Spleen (tissue), 13 donors: ENCODE measurements at regions of chr19 and their contacts with region 1.

Region 1: GRCh38 chr19:49676690-49677231 is 310 bp upstream of the PRMT1 start:
- DNase-seq: peak; percentile 99
- H3K4me3 ChIP-seq: peak overlapping the region; percentile 88 to 100 (median 98)
- H3K27ac ChIP-seq: peak overlapping the region; percentile 89 to 97 (median 94)
- H3K4me1 ChIP-seq: peaks cover 23 to 90% (median 55%) of the 10 kb centered on the region in 6 donors
- H3K27me3 ChIP-seq: no peaks in the 10 kb centered on the region
- CTCF ChIP-seq: peak in 1 of 11 experiments; percentile 30
- POLR2A ChIP-seq: no peak

Region 2: GRCh38 chr19:49570138-49570856 is 106.5 kb before region 1 on chr19:
- intact Hi-C with region 1: loop called (anchors 10 kb)
- DNase-seq: no peak
- H3K4me3 ChIP-seq: no peak overlapping the region
- H3K27ac ChIP-seq: peak overlapping the region in 6 of 8 donors; percentile 23 to 76 (median 72)
- H3K4me1 ChIP-seq: peaks cover 12 to 69% (median 59%) of the 10 kb centered on the region in 6 donors
- H3K27me3 ChIP-seq: no peaks in the 10 kb centered on the region
- CTCF ChIP-seq: peak; percentile 94 to 99 (median 97)
- POLR2A ChIP-seq: peak in 1 of 3 donors; percentile 1

Region 3: GRCh38 chr19:49585023-49585422 is 91.7 kb before region 1 on chr19:
- intact Hi-C with region 1: no loop called
- DNase-seq: no peak
- H3K4me3 ChIP-seq: no peak overlapping the region
- H3K27ac ChIP-seq: no peak overlapping the region
- H3K4me1 ChIP-seq: peaks cover 0 to 24% (median 17%) of the 10 kb centered on the region in 6 donors
- H3K27me3 ChIP-seq: no peaks in the 10 kb centered on the region
- CTCF ChIP-seq: no peak
- POLR2A ChIP-seq: no peak